ENCODE measurements at regions of chr19 and their contacts with region 1.

Region 1: GRCh38 chr19:11964858-11965645 is at the start of gene ZNF763:
- DNase-seq: peak; percentile 72 to 95 (median 86)
- ATAC-seq: peak; percentile 91
- H3K4me3 Mint-ChIP-seq: peak within 1 kb of the TSS; percentile 90 to 99 (median 96)
- H3K27ac Mint-ChIP-seq: peak within 1 kb of the TSS; percentile 78 to 99 (median 96)
- H3K4me1 Mint-ChIP-seq: peaks cover 16 to 31% (median 29%) of the 10 kb centered on the region in 4 donors
- H3K27me3 Mint-ChIP-seq: no peaks in the 10 kb centered on the region
- polyA plus RNA-seq, gene ZNF763: 1.9 to 3.9 (median 2.6) TPM

Region 2: GRCh38 chr19:11856596-11857250 is 108.3 kb before region 1 on chr19:
- POLR2A ChIA-PET with region 1: no interaction called
- DNase-seq: no peak
- ATAC-seq: no peak
- H3K4me3 Mint-ChIP-seq: peak overlapping the region in 1 of 10 donors; percentile 24
- H3K27ac Mint-ChIP-seq: peak overlapping the region in 1 of 10 donors; percentile 25
- H3K4me1 Mint-ChIP-seq: peaks cover 0 to 5% (median 1%) of the 10 kb centered on the region in 4 donors
- H3K27me3 Mint-ChIP-seq: no peaks in the 10 kb centered on the region

Region 3: GRCh38 chr19:11987405-11988281 is 22.6 kb after region 1 on chr19:
- POLR2A ChIA-PET with region 1: interaction called, 76 read pairs
- DNase-seq: peak; percentile 82 to 96 (median 89)
- ATAC-seq: peak; percentile 91 to 92
- H3K4me3 Mint-ChIP-seq: peak overlapping the region; percentile 89 to 100 (median 99)
- H3K27ac Mint-ChIP-seq: peak overlapping the region; percentile 83 to 99 (median 97)
- H3K4me1 Mint-ChIP-seq: peaks cover 16 to 35% (median 31%) of the 10 kb centered on the region in 4 donors
- H3K27me3 Mint-ChIP-seq: no peaks in the 10 kb centered on the region

Region 4: DNA sequence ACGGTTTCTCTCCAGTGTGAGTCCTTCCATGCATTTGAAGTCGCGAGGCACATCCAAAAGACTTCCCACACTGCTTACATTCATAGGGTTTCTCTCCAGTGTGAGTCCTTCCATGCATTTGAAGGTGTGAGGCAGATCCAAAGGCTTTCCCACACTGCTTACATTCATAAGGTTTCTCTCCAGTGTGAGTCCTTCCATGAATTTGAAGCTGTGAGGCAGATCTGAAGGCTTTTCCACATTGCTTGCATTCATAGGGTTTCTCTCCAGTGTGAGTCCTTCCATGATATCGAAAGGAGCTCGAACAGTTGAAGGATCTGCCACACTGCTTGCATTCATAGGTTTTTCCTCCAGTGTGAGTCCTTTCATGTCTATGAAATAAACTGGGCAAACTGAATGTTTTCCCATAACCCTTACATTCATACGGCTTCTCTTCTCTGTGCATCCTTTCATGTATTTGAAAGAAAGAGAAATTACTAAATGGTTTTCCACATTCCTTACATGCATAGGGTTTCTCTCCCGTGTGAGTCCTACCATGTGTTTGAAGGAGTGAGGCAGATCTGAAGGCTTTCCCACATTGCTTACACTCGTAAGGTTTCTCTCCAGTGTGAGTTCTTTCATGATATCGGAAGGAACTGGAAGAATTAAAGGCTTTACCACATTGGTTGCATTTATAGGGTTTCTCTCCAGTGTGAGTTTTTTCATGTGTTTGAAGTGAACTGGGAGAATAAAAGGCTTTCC is 50.1 kb after region 1 on chr19:
- POLR2A ChIA-PET with region 1: no interaction called
- DNase-seq: no peak
- ATAC-seq: no peak
- H3K4me3 Mint-ChIP-seq: no peak overlapping the region
- H3K27ac Mint-ChIP-seq: no peak overlapping the region
- H3K4me1 Mint-ChIP-seq: no peaks in the 10 kb centered on the region
- H3K27me3 Mint-ChIP-seq: no peaks in the 10 kb centered on the region